ENCODE measurements at regions of chr5 and their contacts with region 1.

Region 1: GRCh38 chr5:99060306-99061261 is 131.8 kb upstream of the CHD1 start:
- DNase-seq: peak; percentile 78
- H3K27ac ChIP-seq: no peak overlapping the region
- CTCF ChIP-seq: peak; percentile 96

Region 2: DNA sequence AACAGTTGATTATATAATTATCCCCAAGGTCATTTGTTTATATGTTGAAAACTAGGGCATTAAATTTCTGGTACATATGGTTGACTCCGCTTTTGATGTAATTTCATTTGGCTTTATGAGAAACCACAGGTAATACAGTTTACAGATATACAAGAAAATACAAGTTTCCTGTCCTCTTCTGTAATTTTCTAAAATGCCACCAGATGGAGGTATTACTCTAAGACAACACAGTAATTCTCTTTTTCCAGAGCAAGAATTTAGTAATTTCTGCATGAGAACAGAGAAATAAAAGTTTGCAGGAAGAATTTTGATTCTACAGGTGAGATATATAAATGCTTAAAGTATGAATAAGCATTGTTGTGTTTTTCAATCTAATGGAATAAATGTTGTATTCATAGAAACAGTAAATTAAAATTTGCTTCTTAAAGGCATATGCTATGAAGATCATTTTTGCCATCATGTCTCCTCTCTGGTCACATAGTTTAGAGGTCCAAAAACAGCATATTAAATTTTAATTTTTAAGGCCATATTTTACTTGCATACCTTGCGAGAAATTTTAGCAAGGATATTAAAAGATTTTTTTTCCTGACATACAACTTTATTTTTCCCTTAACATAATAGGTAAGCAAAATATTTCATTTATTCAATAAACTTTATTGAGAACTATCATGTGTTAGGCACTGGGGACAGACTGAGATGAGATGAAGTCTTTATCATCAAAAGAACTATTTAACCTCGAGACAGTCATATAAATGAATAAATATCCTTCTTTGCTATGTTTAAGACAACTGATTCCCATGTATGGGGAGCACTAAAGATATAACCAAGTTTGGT is 154.5 kb before region 1 on chr5:
- CTCF ChIA-PET with region 1: interaction called, 13 read pairs
- POLR2A ChIA-PET with region 1: no interaction called
- DNase-seq: peak; percentile 27
- H3K27ac ChIP-seq: no peak overlapping the region
- CTCF ChIP-seq: peak; percentile 85

Region 3: DNA sequence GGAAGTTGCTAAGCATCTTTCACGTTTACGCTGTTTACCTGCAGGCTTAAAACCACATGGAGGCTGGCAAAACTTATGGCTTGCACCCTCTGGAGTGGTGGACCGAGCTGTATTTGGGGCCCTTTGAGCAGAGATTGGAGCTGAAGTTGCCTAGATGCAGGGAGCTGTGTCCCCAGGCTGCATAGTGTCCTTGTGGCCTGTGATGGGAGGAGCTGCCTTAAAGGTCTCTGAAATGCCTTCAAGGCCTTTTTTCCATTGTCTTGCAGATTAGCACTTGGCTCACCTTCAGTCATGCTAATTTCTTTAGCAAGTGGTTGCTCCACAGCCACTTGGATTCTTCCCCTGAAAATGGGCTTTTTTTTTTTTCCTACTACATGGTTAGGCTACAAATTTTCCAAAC is 50.3 kb before region 1 on chr5:
- CTCF ChIA-PET with region 1: no interaction called
- POLR2A ChIA-PET with region 1: no interaction called
- DNase-seq: no peak
- H3K27ac ChIP-seq: no peak overlapping the region
- CTCF ChIP-seq: no peak

Measured in RWPE1 (cell line).